GM18951 (cell line): ENCODE measurements at regions of chr7 and their contacts with region 1.

Region 1: DNA sequence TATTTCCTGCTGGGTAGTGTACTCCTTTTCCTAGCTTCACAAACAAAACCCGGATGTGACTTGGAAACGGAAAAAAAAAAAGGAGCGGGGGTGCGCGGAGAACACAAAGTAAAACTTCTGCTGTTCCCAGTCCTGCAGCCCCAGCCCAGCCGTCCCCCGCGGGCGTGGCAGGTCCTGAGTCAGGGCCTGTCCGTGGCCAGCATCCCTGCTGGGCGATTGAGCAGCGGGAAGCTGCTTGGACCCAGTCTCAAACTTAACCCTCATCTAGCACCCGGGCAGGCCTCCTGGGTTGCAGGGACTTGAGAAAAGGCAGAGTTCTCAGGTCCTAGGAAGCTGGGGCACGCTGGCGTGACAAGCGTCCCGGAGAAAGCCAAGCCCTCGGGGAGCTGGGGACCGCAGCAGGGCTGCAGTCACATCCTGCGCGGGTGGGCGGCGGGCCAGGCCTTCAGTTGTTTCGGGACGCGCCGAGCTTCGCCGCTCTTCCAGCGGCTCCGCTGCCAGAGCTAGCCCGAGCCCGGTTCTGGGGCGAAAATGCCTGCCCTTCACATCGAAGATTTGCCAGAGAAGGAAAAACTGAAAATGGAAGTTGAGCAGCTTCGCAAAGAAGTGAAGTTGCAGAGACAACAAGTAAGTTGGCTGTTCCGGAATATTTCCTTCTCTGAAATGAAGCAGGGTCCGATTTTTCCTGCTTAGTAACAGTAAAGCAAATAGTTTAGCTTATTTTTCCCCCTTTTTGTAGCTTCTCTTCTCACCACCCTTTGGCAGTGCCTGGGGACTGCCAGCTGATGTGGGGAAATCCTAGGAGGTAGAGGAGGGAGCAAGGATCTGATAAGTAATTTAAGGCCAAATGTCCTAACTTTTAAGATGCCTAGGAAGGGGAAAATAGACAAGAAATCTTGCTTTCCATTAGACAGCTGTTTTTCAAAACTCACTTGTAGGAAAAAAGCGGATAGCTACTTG is at the start of gene GNG11:
- POLR2A ChIP-seq: peak; percentile 23

Region 2: GRCh38 chr7:93992423-93993110 is 70.7 kb after region 1 on chr7:
- in situ Hi-C with region 1: no loop called
- POLR2A ChIP-seq: no peak

Region 3: DNA sequence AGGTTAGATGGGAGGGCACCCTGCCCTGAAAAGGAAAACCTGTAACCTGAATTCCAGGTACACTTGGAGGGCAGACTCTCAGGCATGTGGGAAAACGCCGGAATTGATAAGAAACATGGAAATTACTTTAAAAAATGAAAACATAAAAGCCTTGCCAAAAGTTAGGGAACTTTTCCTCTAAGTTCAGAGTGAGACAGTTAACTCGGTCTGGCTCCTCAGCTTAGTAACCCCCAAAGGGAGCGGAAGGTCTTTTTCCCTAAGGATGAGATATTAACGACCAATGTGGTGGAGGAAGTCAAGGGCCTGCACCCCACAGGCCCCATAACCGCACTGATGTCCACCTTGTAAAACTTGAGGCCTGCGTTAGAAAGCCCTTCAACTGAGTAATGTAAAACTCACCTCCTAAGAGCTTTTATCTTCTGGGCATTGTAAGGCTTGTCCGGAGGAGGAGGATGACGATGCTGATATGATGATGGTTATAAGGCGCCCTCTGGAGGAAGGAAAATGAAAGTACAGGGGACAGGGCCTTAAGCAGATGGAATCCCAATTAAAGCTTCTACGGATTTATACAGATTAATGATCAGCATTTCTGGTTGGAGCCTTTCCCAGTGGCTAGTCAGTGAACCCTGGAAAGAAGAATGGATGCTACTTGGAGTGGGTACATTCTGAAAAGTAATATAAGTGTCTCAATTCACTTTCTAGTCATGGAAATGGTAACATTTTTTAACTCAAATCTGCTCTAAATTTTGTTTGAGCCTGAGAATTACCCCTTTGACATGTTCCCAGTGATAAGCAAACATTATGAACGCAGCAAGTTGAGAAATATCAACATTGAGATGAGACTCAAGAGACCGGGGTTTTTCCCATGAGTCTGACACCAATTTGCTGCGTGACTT is 473.5 kb after region 1 on chr7:
- in situ Hi-C with region 1: loop called (anchors 25 kb)
- POLR2A ChIP-seq: no peak